ENCODE measurements at regions of chr15 and their contacts with region 1.

Region 1: DNA sequence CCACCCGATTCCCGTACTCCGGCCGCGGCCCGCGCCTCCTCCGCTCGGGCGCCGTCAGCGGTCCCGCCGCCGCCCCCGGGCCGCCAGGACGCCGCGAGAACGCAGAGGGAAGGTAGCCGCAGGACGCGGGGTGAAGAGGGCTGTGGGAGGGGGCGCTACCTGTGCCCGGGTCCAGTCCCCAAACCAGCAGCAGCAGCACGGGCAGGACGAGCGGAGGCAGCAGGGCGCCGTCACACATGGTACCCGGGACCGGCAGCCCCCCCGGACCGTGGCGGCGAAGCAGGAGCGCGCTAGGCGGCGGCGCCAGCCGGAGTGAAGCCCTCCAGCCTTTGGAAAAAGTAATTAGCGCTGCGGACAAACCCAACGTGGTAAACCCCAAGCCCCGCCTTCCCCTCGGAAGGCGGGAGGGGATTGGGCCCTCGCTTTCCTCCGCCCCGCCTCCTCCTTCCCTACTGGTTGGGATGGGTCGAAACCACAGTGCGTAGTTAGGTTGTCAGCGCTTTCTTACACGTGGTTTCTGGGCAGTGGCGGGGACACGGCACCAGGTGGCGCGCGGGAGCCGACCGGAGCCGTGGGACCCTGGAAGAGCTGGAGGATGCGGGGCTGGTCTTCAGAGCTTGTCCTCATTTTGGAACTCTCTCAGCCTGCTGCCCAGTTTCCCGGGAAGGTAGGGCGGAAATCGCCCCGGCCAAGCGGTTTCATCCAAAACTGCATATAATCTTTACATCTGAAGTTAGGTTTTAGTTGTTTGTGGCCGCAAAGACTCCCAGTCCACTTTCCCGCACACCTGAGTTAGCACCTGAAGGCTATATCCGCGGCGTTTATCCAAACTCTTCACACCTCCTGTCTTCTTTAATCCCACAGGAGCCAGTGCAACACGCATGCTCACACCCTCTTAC is at the start of gene ADAMTS17:
- DNase-seq: peak; percentile 80 to 96 (median 94)
- ATAC-seq: peak; percentile 98
- H3K4me3 ChIP-seq: peak within 1 kb of the TSS; percentile 69
- H3K4me3 Mint-ChIP-seq: peak within 1 kb of the TSS; percentile 59 to 88 (median 76)
- H3K27ac ChIP-seq: peak within 1 kb of the TSS; percentile 76
- H3K27ac Mint-ChIP-seq: peak within 1 kb of the TSS in 6 of 9 donors; percentile 6 to 76 (median 29)
- H3K4me1 ChIP-seq: peaks cover 4 to 6% of the 10 kb centered on the region in 2 donors
- H3K4me1 Mint-ChIP-seq: peaks cover 7 to 36% (median 28%) of the 10 kb centered on the region in 7 donors
- H3K27me3 ChIP-seq: no peaks in the 10 kb centered on the region
- H3K27me3 Mint-ChIP-seq: peaks cover 0 to 57% (median 4%) of the 10 kb centered on the region in 5 donors
- total RNA-seq, gene ADAMTS17: 2.0 to 13.5 (median 3.2) TPM

Region 2: GRCh38 chr15:99250494-99251435 is 1091.1 kb before region 1 on chr15:
- CTCF ChIA-PET with region 1: no interaction called
- POLR2A ChIA-PET with region 1: no interaction called
- intact Hi-C with region 1: loop called in 1 of 2 experiments (anchors 5 kb)
- DNase-seq: peak; percentile 78 to 95 (median 92)
- ATAC-seq: peak; percentile 96
- H3K4me3 ChIP-seq: peak overlapping the region; percentile 76
- H3K4me3 Mint-ChIP-seq: peak overlapping the region in 8 of 10 donors; percentile 81 to 95 (median 92)
- H3K27ac ChIP-seq: peak overlapping the region; percentile 65
- H3K27ac Mint-ChIP-seq: peak overlapping the region; percentile 83 to 92 (median 90)
- H3K4me1 ChIP-seq: peaks cover 14 to 28% of the 10 kb centered on the region in 2 donors
- H3K4me1 Mint-ChIP-seq: peaks cover 24 to 32% (median 27%) of the 10 kb centered on the region in 7 donors
- H3K27me3 ChIP-seq: no peaks in the 10 kb centered on the region
- H3K27me3 Mint-ChIP-seq: no peaks in the 10 kb centered on the region

Region 3: GRCh38 chr15:99928429-99928981 is 413.4 kb before region 1 on chr15:
- CTCF ChIA-PET with region 1: interaction called, 32 read pairs
- POLR2A ChIA-PET with region 1: interaction called, 16 read pairs
- intact Hi-C with region 1: loop called (anchors 2 kb)
- DNase-seq: peak; percentile 68 to 93 (median 91)
- ATAC-seq: peak; percentile 97
- H3K4me3 ChIP-seq: peak overlapping the region; percentile 56
- H3K4me3 Mint-ChIP-seq: peak overlapping the region; percentile 79 to 92 (median 88)
- H3K27ac ChIP-seq: peak overlapping the region; percentile 76
- H3K27ac Mint-ChIP-seq: peak overlapping the region; percentile 80 to 95 (median 89)
- H3K4me1 ChIP-seq: peaks cover 12 to 17% of the 10 kb centered on the region in 2 donors
- H3K4me1 Mint-ChIP-seq: peaks cover 13 to 28% (median 19%) of the 10 kb centered on the region in 7 donors
- H3K27me3 ChIP-seq: no peaks in the 10 kb centered on the region
- H3K27me3 Mint-ChIP-seq: peaks cover 0 to 27% (median 0%) of the 10 kb centered on the region in 5 donors

Region 4: GRCh38 chr15:100131321-100132224 is 210.3 kb before region 1 on chr15:
- CTCF ChIA-PET with region 1: interaction called, 9 read pairs
- POLR2A ChIA-PET with region 1: no interaction called
- intact Hi-C with region 1: loop called in 1 of 2 experiments (anchors 2 kb)
- DNase-seq: peak in 4 of 9 donors; percentile 7 to 38 (median 18)
- ATAC-seq: peak; percentile 53
- H3K4me3 ChIP-seq: no peak overlapping the region
- H3K4me3 Mint-ChIP-seq: peak overlapping the region in 7 of 10 donors; percentile 33 to 73 (median 56)
- H3K27ac ChIP-seq: no peak overlapping the region
- H3K27ac Mint-ChIP-seq: no peak overlapping the region
- H3K4me1 ChIP-seq: no peaks in the 10 kb centered on the region
- H3K4me1 Mint-ChIP-seq: no peaks in the 10 kb centered on the region
- H3K27me3 ChIP-seq: no peaks in the 10 kb centered on the region
- H3K27me3 Mint-ChIP-seq: no peaks in the 10 kb centered on the region

Region 5: DNA sequence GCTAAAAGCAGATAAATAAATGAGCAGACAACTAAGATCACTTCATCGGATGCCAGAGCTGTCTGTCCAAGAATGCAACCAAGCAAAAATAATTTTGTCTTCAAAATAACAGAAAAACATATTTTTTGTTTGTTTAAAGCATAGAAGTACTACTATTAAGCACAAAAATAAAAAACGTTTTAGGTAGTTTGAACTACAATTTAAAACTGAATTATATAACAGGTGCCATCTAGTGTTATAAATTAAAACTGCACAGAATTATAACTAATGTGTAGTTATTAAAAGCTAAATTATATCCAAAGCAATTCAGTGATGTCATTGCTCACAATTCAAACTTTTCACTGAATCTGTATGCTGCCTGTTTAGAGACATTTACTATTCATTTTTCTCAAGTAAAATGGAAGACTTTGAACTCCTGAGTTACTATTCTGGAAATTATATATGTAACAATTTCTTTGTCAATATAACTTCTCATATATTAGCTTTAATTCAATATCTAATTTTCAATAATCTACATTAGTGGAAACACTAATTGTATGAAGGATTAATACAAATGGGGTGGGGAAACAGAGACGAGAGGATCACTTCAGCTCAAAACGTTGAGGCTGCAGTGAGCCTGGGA is 230.6 kb after region 1 on chr15:
- CTCF ChIA-PET with region 1: interaction called, 135 read pairs
- POLR2A ChIA-PET with region 1: interaction called, 4 read pairs
- intact Hi-C with region 1: loop called in 1 of 2 experiments (anchors 1 kb)
- DNase-seq: peak in 6 of 9 donors; percentile 22 to 52 (median 47)
- ATAC-seq: peak; percentile 67
- H3K4me3 ChIP-seq: peak overlapping the region; percentile 5
- H3K4me3 Mint-ChIP-seq: peak overlapping the region; percentile 34 to 86 (median 80)
- H3K27ac ChIP-seq: peak overlapping the region; percentile 65
- H3K27ac Mint-ChIP-seq: peak overlapping the region; percentile 84 to 99 (median 94)
- H3K4me1 ChIP-seq: peaks cover 0 to 36% of the 10 kb centered on the region in 2 donors
- H3K4me1 Mint-ChIP-seq: peaks cover 22 to 83% (median 70%) of the 10 kb centered on the region in 7 donors
- H3K27me3 ChIP-seq: no peaks in the 10 kb centered on the region
- H3K27me3 Mint-ChIP-seq: no peaks in the 10 kb centered on the region

Region 6: DNA sequence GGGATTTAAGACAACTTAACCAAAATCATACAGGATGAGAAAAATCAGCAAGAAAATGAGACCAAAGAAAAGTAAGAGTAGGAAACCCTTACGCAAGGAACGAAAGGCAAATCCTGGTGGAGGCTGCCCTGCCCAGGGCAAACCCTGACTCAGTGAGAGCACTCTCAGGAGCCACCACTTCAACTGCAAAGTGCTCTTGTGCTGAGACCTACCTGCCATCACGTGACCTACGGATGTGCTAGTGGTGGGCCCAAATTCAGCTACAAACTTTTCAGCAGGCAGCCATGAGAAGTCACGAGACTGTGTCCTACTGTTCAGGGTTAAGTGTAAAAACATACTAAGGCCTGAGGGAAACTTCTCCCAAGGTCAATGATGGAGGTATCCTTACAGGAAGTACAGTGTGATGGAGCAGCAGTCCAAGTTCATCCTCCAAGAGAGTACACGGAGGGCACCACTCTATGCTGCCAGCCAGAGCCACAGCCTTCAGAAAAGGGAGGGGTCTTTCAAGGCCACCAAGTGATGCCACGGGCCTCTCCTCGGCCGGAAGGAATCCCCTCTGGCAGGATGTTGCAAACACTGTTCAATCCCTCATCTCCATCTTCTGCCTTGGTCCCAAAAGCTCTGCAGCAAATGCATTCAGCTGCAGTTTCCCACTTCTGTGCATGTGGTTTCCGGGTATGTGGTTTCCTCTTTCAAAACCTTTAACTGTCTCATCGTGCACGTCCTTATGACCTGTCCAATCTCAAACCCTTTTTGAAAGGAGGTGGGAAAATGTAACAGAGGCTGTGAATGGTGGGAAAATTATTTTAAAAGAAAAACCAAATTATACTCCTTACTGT is 900.5 kb after region 1 on chr15:
- CTCF ChIA-PET with region 1: no interaction called
- POLR2A ChIA-PET with region 1: no interaction called
- intact Hi-C with region 1: loop called in 1 of 2 experiments (anchors 2 kb)
- DNase-seq: peak in 8 of 9 donors; percentile 54 to 79 (median 74)
- ATAC-seq: peak; percentile 93
- H3K4me3 ChIP-seq: peak overlapping the region; percentile 40
- H3K4me3 Mint-ChIP-seq: peak overlapping the region; percentile 60 to 83 (median 71)
- H3K27ac ChIP-seq: no peak overlapping the region
- H3K27ac Mint-ChIP-seq: peak overlapping the region in 8 of 9 donors; percentile 53 to 89 (median 74)
- H3K4me1 ChIP-seq: peaks cover 63 to 80% of the 10 kb centered on the region in 2 donors
- H3K4me1 Mint-ChIP-seq: peaks cover 56 to 88% (median 85%) of the 10 kb centered on the region in 7 donors
- H3K27me3 ChIP-seq: no peaks in the 10 kb centered on the region
- H3K27me3 Mint-ChIP-seq: no peaks in the 10 kb centered on the region

Measured in naive thymus-derived CD4-positive, alpha-beta T cell (primary cell).